Breast epithelium (tissue), 4 donors: ENCODE measurements at regions of chr7 and their contacts with region 1.

Region 1: DNA sequence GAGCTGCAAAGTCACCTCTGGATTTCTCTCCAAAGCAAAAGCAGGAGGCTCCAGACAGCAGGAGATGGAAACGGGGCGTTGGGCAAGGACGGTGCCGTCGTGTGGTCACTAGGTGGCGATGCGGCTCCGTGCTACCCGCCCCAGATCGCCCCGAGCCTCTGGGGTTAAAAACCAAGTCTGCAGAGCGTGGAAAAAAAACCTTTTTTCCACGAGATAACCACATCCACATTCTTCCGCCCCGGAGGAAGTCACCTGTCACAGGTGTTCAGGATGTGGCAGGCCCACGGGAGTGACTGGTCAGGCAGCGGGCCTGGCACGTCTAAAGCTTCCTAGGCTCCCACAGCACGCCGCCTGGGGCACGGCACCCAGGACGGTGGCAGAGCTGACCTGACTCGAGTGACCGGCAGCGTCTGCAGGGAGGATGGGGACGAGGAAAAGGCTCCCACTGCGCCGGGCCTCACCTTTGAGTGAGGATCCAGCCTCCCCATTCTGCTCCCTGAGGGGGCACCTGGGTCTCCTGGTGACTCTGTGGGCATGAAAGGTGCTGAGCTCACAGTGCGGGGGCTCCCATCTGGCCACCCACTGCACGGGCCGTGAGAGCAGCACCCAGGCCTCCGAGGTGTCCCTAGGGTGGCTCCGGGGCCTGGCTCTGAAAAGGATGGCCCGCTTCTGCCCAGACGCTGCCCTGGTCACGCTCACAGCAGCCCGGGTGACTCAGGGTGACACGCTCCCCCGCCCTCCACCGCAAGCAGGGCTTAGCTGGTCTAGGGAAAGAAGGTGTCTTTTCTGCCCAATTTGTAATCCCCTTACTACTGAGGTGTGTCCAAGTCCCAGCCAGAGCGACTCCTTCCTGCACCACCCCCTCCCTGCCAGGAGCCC is 71.3 kb upstream of the TNRC18 start:
- DNase-seq: peak; percentile 70 to 80
- H3K4me3 ChIP-seq: peak overlapping the region in 2 of 3 donors; percentile 31 to 40
- H3K27ac ChIP-seq: peak overlapping the region; percentile 66 to 75
- H3K4me1 ChIP-seq: peaks cover 7 to 14% of the 10 kb centered on the region in 2 donors
- H3K27me3 ChIP-seq: no peaks in the 10 kb centered on the region
- CTCF ChIP-seq: peak; percentile 79 to 95 (median 95)
- POLR2A ChIP-seq: no peak

Region 2: GRCh38 chr7:5477723-5478531 is 17.0 kb before region 1 on chr7:
- intact Hi-C with region 1: no loop called
- DNase-seq: no peak
- H3K4me3 ChIP-seq: peak overlapping the region; percentile 22 to 33 (median 28)
- H3K27ac ChIP-seq: no peak overlapping the region
- H3K4me1 ChIP-seq: no peaks in the 10 kb centered on the region
- H3K27me3 ChIP-seq: no peaks in the 10 kb centered on the region
- CTCF ChIP-seq: no peak
- POLR2A ChIP-seq: no peak

Region 3: GRCh38 chr7:5526100-5526905 is 31.4 kb after region 1 on chr7:
- intact Hi-C with region 1: loop called (anchors 2 kb)
- DNase-seq: peak in 1 of 2 donors; percentile 77
- H3K4me3 ChIP-seq: peak overlapping the region; percentile 86 to 94 (median 88)
- H3K27ac ChIP-seq: peak overlapping the region; percentile 100
- H3K4me1 ChIP-seq: peaks cover 0 to 3% of the 10 kb centered on the region in 2 donors
- H3K27me3 ChIP-seq: no peaks in the 10 kb centered on the region
- CTCF ChIP-seq: no peak
- POLR2A ChIP-seq: no peak

Region 4: GRCh38 chr7:5665094-5666025 is 170.4 kb after region 1 on chr7:
- intact Hi-C with region 1: loop called (anchors 10 kb)
- DNase-seq: peak; percentile 63 to 68
- H3K4me3 ChIP-seq: no peak overlapping the region
- H3K27ac ChIP-seq: no peak overlapping the region
- H3K4me1 ChIP-seq: no peaks in the 10 kb centered on the region
- H3K27me3 ChIP-seq: no peaks in the 10 kb centered on the region
- CTCF ChIP-seq: peak; percentile 84 to 92 (median 92)
- POLR2A ChIP-seq: no peak